Heart left ventricle (tissue), 16 donors: ENCODE measurements at regions of chr16 and their contacts with region 1.

Region 1: GRCh38 chr16:2422123-2422867 is 7.0 kb upstream of the CCNF start:
- DNase-seq: no peak
- ATAC-seq: peak in 1 of 4 donors; percentile 37
- H3K4me3 ChIP-seq: no peak overlapping the region
- H3K27ac ChIP-seq: no peak overlapping the region
- H3K4me1 ChIP-seq: peaks cover 0 to 3% (median 0%) of the 10 kb centered on the region in 12 donors
- H3K27me3 ChIP-seq: no peaks in the 10 kb centered on the region
- CTCF ChIP-seq: no peak
- POLR2A ChIP-seq: no peak

Region 2: DNA sequence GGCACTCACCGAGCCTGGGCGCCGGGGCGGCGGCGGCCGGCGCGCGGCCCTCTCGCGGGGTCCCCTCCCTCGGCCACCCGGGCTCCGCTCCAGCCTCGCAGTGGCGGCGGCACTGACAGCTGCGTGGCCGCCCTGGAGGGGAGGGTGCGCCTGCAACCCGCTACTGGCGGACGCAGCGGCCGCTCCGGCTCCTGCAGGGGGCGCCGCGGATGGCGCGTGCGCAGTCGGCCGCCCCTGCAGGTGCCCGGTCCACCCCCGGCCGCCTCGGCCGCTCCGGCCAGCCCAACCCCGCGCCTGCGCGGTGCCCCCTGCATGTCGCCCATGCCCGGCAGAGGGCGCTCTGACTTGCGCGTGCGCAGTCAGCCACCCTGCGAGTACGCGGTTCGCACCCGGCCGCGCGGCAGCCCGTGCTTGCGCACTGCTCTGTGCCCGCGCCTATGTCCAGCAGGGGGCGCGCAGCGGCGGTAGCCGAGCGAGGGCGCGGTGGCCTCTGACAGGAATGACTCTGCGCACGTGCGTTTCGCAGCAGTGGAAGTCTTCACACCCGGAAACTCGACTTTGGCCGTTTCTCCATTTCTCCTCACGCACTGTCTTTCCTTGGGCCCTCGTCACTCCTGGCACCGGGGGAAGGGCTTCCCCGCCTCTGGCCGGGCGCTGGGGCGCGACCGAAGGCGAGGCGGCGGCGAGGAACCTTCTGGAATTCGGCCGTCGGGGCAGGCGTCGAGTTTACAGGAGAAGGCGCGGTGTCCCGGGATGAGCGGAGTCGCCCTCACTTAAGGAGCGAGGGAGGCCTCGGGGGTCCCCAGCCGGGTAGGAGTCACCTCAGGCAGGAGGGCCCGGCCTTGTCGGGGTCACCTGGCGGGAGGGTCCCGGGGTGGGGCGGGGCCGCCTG is 81.5 kb before region 1 on chr16 and contains the start of gene ABCA3:
- intact Hi-C with region 1: loop called in 8 of 10 experiments (anchors 1 to 5 kb)
- DNase-seq: peak; percentile 92 to 97 (median 93)
- ATAC-seq: peak; percentile 95 to 97 (median 96)
- H3K4me3 ChIP-seq: peak within 1 kb of the TSS; percentile 70 to 96 (median 82)
- H3K27ac ChIP-seq: peak within 1 kb of the TSS in 9 of 12 donors; percentile 14 to 73 (median 61)
- H3K4me1 ChIP-seq: peaks cover 0 to 24% (median 14%) of the 10 kb centered on the region in 12 donors
- H3K27me3 ChIP-seq: peaks cover 0 to 4% (median 0%) of the 10 kb centered on the region in 9 donors
- CTCF ChIP-seq: peak in 11 of 12 donors; percentile 99 to 100 (median 100)
- POLR2A ChIP-seq: peak in 1 of 2 donors; percentile 68
- total RNA-seq, gene ABCA3: 8.0 to 16.5 (median 10.0) TPM

Region 3: DNA sequence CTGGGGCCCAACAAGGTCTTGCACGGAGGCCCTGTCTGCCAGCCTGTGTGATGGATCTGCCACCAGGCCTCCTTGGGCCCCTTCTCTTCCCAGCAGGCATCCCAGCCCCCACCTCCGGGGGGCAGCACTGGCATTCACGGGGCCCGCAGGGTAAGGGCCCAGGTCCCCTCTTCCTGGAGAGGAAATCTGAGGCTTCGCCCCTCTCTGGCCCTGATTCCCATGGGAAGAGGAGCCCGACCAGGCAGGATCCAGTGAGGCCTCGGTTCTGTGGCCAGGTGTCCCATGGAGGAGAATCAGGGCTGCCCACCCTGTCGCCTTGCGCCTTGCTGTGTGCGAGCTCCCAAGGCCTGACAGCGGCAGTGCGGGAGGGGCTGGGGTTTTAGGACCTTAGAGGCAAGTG is 163.9 kb after region 1 on chr16:
- intact Hi-C with region 1: no loop called
- DNase-seq: no peak
- ATAC-seq: no peak
- H3K4me3 ChIP-seq: no peak overlapping the region
- H3K27ac ChIP-seq: no peak overlapping the region
- H3K4me1 ChIP-seq: peaks cover 0 to 19% (median 8%) of the 10 kb centered on the region in 12 donors
- H3K27me3 ChIP-seq: no peaks in the 10 kb centered on the region
- CTCF ChIP-seq: peak in 2 of 12 donors; percentile 17 to 29
- POLR2A ChIP-seq: no peak